ENCODE measurements at regions of chr5 and their contacts with region 1.

Region 1: DNA sequence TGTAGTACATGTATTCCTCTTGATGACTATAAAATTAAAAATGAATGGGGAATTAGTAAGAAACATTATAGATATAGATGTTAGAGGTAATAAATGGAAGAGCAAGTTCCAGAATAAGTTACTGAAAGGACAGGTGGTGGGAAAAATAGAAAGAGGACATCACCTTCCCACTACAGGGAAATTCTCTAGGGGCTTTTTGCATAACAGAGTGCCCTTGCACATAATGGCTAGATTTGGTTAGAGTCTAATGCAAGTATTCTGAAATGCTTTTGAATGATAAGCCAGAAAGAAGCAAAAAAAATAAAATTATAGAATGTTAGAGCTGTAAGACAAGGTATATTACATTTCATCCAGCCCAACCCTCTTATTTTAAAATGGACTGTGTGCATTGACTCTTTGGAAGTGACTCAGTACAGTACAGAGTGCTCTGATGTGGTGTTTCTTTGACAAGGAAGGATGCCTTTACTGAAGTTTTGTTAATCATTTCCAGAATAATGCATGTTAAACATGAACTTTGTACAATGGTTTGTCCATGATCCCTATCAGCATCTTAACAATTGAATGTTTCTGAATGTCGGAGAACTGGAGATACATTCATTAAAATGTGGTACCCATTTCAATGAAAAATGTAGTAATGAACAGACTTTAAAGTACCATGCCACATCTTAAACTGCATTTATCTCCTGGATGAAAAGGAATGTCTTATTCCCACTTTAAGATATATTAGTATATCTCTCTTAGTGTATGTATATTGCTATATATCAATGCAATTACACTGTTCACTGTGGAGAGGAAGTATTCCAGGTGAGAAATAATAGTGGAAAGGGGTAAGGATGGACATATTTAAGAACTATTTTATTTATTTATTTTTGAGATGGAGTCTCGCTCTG is 391.1 kb downstream of the ADGRV1 start:
- DNase-seq: no peak
- H3K4me3 ChIP-seq: no peak overlapping the region
- H3K27ac ChIP-seq: no peak overlapping the region
- H3K4me1 ChIP-seq: peaks cover 0 to 8% (median 0%) of the 10 kb centered on the region in 4 donors
- H3K27me3 ChIP-seq: no peaks in the 10 kb centered on the region
- CTCF ChIP-seq: no peak
- EP300 ChIP-seq: no peak
- POLR2A ChIP-seq: no peak

Region 2: DNA sequence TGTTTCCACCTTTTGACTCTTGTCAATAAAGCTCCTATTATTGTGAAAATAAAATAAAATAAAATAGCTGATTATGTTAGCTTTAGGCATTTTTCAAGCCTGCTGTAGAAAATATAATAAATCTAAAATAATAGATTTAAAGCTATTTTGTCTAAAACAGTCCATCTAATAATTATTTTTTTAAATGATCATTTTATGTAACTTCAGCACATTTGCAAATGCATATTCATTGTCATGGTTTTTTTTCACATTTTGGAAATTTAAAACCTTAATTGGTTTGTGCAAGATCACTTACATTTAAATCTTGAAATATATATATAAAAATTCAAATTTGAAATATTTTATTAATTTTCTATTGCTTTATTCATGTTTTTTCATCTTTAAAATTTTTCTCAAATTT is 231.3 kb before region 1 on chr5:
- intact Hi-C with region 1: no loop called
- DNase-seq: no peak
- H3K4me3 ChIP-seq: no peak overlapping the region
- H3K27ac ChIP-seq: no peak overlapping the region
- H3K4me1 ChIP-seq: no peaks in the 10 kb centered on the region
- H3K27me3 ChIP-seq: no peaks in the 10 kb centered on the region
- CTCF ChIP-seq: no peak
- EP300 ChIP-seq: no peak
- POLR2A ChIP-seq: no peak

Region 3: GRCh38 chr5:91038180-91038808 is 88.6 kb after region 1 on chr5:
- intact Hi-C with region 1: loop called (anchors 5 kb)
- DNase-seq: peak; percentile 83
- H3K4me3 ChIP-seq: no peak overlapping the region
- H3K27ac ChIP-seq: peak overlapping the region in 3 of 4 donors; percentile 45 to 56 (median 55)
- H3K4me1 ChIP-seq: peaks cover 0 to 41% (median 36%) of the 10 kb centered on the region in 4 donors
- H3K27me3 ChIP-seq: no peaks in the 10 kb centered on the region
- CTCF ChIP-seq: no peak
- EP300 ChIP-seq: peak; percentile 29 to 83 (median 60)
- POLR2A ChIP-seq: no peak